ENCODE measurements at regions of chr7 and their contacts with region 1.

Region 1: GRCh38 chr7:85851571-85852193 is 664.8 kb upstream of the SEMA3D start:
- H3K4me3 ChIP-seq: no peak overlapping the region
- H3K27ac ChIP-seq: no peak overlapping the region
- H3K4me1 ChIP-seq: no peaks in the 10 kb centered on the region
- CTCF ChIP-seq: no peak

Region 2: GRCh38 chr7:85030893-85031292 is 820.8 kb before region 1 on chr7:
- CTCF ChIA-PET with region 1: interaction called, 13 read pairs
- POLR2A ChIA-PET with region 1: no interaction called
- H3K4me3 ChIP-seq: no peak overlapping the region
- H3K27ac ChIP-seq: no peak overlapping the region
- H3K4me1 ChIP-seq: peaks cover 21% of the 10 kb centered on the region
- CTCF ChIP-seq: no peak

Region 3: DNA sequence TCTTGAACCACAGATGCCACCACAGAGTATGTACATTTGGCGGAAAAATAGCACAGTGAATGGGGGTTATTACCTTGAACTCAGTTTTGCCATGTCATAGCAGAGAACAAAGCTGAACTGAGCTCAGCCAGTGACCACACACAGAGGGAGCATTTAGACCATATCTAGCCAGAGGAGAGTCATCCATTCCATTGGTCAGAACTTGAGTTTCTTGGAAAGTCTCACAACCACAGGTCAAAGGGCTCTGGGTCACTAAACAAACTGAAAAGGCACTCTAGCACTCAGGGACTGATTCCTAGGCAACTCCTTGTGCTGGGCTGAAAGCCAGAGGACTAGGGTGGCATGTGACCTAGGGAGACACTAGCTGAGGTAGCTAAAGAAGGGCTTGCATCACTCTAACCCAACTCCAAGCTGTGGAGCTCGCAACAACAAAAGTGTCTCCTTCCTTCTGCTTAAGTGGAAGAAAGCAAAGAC is 425.2 kb before region 1 on chr7:
- CTCF ChIA-PET with region 1: no interaction called
- POLR2A ChIA-PET with region 1: no interaction called
- H3K4me3 ChIP-seq: no peak overlapping the region
- H3K27ac ChIP-seq: no peak overlapping the region
- H3K4me1 ChIP-seq: no peaks in the 10 kb centered on the region
- CTCF ChIP-seq: no peak

Region 4: DNA sequence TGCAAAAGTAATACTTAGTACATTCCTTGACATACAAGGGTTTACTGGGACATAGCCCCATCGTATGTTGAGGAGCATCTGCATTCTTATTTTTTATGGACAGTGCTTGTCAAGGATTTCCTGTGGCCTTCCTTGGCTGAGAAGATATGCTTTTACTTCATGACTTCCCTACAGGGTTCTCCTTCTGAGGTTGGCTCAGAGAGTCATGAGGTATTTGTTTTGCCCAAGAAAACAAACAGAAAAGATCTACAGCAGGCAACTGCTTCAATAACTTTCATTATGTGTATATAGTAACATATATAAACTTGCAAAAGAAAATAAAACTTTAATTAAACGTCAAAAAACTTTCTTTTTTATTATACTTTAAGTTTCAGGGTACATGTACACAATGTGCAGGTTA is 87.6 kb before region 1 on chr7:
- CTCF ChIA-PET with region 1: no interaction called
- POLR2A ChIA-PET with region 1: no interaction called
- H3K4me3 ChIP-seq: no peak overlapping the region
- H3K27ac ChIP-seq: no peak overlapping the region
- H3K4me1 ChIP-seq: no peaks in the 10 kb centered on the region
- CTCF ChIP-seq: no peak

Region 5: DNA sequence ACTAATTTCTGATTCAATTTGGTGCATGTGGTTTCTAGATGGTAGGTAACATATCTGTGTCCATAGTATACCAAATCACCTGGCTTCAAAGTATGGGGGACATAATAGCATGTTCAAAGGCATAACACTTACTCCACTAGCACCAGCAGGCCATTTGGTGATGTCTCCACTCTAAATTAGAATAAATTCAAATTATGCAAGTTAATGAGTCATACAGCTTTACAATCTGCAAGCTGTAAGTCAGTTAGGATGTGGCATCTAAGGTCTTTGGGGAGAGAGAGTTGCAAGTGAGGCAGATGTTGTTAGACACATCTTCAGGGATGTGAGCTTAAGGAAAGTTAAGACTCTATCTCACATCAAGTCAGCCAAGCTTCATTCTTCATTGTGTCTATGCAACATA is 285.7 kb after region 1 on chr7:
- CTCF ChIA-PET with region 1: no interaction called
- POLR2A ChIA-PET with region 1: no interaction called
- H3K4me3 ChIP-seq: no peak overlapping the region
- H3K27ac ChIP-seq: no peak overlapping the region
- H3K4me1 ChIP-seq: no peaks in the 10 kb centered on the region
- CTCF ChIP-seq: no peak

Measured in HEK293 (cell line).